Dorsolateral prefrontal cortex (tissue), 120 donors: ENCODE measurements at regions of chr1 and their contacts with region 1.

Region 1: GRCh38 chr1:68116643-68117235 is 66.3 kb upstream of the DIRAS3 start:
- DNase-seq: peak in 4 of 10 donors; percentile 52 to 69 (median 57)
- H3K4me3 ChIP-seq: peak overlapping the region in 26 of 59 donors; percentile 11 to 46 (median 34)
- H3K27ac ChIP-seq: peak overlapping the region in 3 of 59 donors; percentile 15 to 51 (median 38)
- H3K27me3 ChIP-seq: no peaks in the 10 kb centered on the region
- CTCF ChIP-seq: peak; percentile 76 to 97 (median 89)

Region 2: DNA sequence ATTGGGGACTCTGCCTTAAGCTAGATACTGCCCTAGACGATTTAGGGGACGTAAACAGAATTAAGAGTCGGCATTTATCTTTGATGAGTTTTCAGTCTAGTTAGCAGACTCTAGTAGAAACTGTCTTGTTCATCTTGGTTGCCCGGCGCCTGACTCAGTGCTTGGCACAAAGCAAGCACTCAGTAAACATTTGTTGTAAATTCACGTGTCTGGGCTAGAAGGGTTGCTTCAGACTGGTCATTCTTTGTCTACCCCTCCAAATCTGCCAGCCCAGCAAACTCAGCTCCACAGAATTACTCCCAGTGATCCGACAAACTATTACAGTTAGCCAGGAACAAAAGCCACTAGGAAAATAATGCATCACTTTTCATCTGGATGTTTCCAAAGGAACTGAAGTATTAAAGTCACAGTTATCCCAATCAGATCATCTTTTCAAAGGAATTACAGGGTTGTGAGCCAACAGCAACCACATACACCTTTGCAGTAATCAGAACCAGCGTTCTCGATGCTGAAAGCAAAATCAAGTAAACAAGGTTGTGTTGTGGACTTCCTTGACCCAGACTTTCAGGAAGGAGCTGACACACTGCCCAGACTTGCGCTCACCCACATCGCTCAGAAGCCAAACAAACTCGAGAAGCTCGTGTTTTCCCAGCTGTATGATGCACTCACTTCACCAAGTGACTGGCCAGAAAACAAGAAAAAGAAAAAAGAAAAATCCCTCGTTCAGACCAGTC is 498.3 kb before region 1 on chr1:
- intact Hi-C with region 1: no loop called
- DNase-seq: peak in 4 of 10 donors; percentile 40 to 44 (median 40)
- H3K4me3 ChIP-seq: peak overlapping the region in 17 of 59 donors; percentile 1 to 36 (median 17)
- H3K27ac ChIP-seq: peak overlapping the region in 56 of 59 donors; percentile 12 to 89 (median 64)
- H3K27me3 ChIP-seq: peaks cover 0 to 6% (median 0%) of the 10 kb centered on the region in 45 donors
- CTCF ChIP-seq: no peak

Region 3: DNA sequence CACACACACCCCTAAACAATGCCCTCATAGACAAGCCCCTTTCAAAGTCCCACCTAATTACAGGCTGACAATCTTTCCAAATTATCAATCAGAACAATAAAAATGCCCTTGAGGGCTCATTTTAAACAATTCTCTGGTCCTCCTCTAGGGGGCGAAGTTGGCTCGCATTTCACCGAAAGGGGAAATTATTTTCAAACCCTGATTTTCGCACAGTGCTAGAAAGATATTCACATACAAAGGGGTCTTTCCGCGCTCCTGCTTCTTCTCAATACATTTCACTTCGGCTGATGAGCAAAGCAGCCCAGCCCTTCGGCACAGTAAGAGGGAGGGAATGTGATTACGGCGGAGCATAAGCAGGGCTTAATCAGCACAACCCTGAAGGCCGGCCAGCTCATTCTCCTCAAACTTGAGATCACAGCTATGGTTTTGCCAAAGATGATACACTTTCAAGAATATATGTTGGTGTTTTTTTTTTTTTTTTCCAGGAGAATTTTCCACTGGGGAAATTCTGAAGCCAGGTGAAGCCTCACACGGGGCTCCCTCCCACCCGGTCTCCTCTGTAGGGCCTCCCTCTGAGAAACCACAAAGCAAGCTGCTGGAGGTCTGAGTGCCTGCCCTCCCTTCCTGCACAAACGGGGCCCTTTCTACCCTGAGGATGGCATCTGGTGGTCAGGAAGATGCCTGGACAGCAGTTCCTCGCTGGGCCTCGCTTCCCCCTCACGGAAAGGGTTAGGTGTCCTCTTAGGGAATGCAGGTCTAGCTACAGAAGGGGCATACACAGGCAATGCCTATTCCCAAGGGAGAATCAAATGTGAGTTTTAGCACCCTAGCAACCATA is 350.4 kb before region 1 on chr1:
- intact Hi-C with region 1: loop called (anchors 2 to 5 kb)
- DNase-seq: peak in 7 of 10 donors; percentile 42 to 68 (median 52)
- H3K4me3 ChIP-seq: peak overlapping the region in 47 of 59 donors; percentile 1 to 65 (median 38)
- H3K27ac ChIP-seq: peak overlapping the region in 1 of 59 donors; percentile 58
- H3K27me3 ChIP-seq: peaks cover 0 to 11% (median 0%) of the 10 kb centered on the region in 45 donors
- CTCF ChIP-seq: peak; percentile 61 to 89 (median 78)

Region 4: GRCh38 chr1:68232354-68233148 is 115.8 kb after region 1 on chr1 and contains the start of gene WLS:
- intact Hi-C with region 1: loop called in 1 of 2 experiments (anchors 5 kb)
- DNase-seq: peak; percentile 30 to 85 (median 81)
- H3K4me3 ChIP-seq: peak within 1 kb of the TSS; percentile 52 to 92 (median 72)
- H3K27ac ChIP-seq: peak within 1 kb of the TSS in 55 of 59 donors; percentile 19 to 88 (median 72)
- H3K27me3 ChIP-seq: no peaks in the 10 kb centered on the region
- CTCF ChIP-seq: peak in 10 of 56 donors; percentile 10 to 26 (median 14)
- total RNA-seq, gene WLS: 60.2 to 237 (median 115) TPM

Region 5: DNA sequence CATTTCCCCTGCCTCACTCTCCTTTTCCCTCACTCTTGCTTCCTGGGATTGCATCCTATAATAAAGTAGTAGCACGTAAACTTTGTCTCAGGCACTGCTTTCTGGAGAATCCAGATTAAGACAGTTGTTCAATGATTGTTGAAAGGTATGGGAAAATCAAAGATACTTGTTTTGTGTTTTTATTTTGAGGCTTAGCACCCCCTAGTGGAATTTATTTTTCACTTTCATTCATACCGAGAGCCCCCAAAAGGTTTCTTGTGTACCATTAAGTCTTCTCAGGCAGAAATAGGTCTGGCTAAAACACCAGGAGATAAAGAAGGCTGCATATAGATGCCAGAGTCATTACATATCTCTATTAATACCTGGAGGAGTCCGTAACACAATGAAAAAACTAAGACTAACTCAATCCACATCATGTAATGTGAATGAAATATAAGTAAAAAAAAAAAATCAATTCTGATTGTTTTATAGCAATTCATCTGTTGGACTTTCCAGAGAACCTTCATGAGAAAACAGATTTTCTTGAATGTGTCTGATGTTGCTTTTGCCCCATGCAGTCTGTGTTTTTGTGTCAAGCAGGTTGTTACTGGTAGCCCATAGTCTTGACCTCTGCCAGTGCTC is 229.6 kb after region 1 on chr1:
- intact Hi-C with region 1: loop called (anchors 1 to 2 kb)
- DNase-seq: no peak
- H3K4me3 ChIP-seq: no peak overlapping the region
- H3K27ac ChIP-seq: no peak overlapping the region
- H3K27me3 ChIP-seq: no peaks in the 10 kb centered on the region
- CTCF ChIP-seq: peak; percentile 40 to 81 (median 60)

Region 6: DNA sequence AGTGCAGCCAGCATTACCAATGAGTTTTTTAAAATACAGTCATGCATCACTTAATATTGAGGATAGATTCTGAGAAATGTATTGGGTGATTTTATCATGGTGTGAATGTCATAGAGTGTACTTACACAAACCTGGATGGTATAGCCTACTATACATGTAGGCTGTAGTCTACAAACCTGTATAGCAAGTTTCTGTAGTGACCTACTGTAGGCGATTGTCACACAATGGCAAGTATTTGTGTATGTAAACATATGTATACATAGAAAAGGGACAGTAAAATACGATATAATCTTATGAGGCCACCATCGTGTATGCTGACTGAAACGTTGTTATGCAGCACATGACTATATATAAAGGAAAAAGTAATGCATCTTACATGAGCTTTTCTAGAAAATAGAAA is 284.8 kb after region 1 on chr1:
- intact Hi-C with region 1: no loop called
- DNase-seq: no peak
- H3K4me3 ChIP-seq: no peak overlapping the region
- H3K27ac ChIP-seq: no peak overlapping the region
- H3K27me3 ChIP-seq: no peaks in the 10 kb centered on the region
- CTCF ChIP-seq: no peak